ENCODE measurements at regions of chr1 and their contacts with region 1.

Region 1: DNA sequence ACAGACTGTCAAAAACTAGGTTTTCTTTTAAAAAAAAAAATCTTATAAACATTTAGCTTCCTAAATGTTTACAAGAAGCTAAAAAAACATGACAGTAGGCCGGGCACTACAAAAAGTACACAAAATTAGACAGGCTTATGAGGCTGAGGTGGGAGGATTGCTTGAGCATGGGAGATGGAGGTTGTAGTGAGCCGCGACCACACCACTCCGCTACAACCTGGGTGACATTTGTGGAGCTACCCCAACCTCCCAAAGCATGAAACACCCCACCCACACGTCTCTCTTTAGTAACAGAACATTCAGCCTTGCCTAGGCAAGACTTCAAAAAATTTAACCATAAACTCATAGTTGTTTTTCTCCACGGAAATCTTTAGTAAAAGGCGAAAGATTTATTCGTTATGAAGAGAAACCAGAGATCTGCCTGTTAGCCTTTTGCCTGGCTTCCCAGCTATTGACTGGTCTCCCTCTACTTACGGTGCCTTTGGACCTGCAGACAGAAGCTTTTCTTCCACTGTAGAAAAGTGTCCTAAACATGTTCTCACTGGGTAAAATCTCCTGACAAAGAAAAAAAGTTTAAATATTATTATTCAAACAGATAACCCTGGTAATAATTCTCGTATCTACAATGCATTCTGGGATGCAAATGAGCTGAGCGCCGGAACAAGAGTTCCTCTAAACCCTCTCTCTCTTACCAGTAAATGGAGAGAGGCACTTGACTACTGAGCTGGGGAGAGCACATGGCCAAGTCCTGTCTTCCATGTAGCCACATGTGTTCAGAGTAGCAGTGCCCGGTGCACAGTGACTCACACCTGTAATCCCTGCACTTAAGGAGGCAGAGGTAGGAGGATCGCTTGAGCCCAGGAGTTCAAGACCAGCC is 9.2 kb downstream of the RNU5D-1 start:
- DNase-seq: peak; percentile 95
- ATAC-seq: peak; percentile 94
- H3K4me3 ChIP-seq: no peak overlapping the region; a peak in 1 of 6 replicates
- H3K27ac ChIP-seq: peak overlapping the region; percentile 84
- H3K4me1 ChIP-seq: peaks cover 54% of the 10 kb centered on the region
- H3K27me3 ChIP-seq: 0 out of 5 replicates have a peak, but pooled peaks cover 0 to 6% of the 10 kb centered on the region in 2 experiments
- CTCF ChIP-seq: no peak
- EP300 ChIP-seq: peak; percentile 59 to 63; a peak in 3 of 4 replicates
- POLR2A ChIP-seq: peak; percentile 100
- RAD21 ChIP-seq: peak; percentile 86

Region 2: GRCh38 chr1:44674113-44675000 is 47.4 kb before region 1 on chr1 and contains the starts of genes ARMH1 and TMEM53:
- CTCF ChIA-PET with region 1: no interaction called
- POLR2A ChIA-PET with region 1: interaction called, 34 read pairs
- in situ Hi-C with region 1: no loop called
- intact Hi-C with region 1: no loop called
- DNase-seq: peak; percentile 98
- ATAC-seq: peak; percentile 93
- H3K4me3 ChIP-seq: peak within 1 kb of the TSS; percentile 64 to 76 (median 67)
- H3K27ac ChIP-seq: peak within 1 kb of the TSS; percentile 93
- H3K4me1 ChIP-seq: peaks cover 65% of the 10 kb centered on the region
- H3K27me3 ChIP-seq: no peaks in the 10 kb centered on the region
- CTCF ChIP-seq: peak; percentile 32; the same call in 1 of the 2 replicates
- EP300 ChIP-seq: peak in 1 of 2 experiments; percentile 18; a peak in 2 of 4 replicates
- POLR2A ChIP-seq: peak; percentile 70 to 91
- RAD21 ChIP-seq: peak; percentile 47; the same call in 1 of the 2 replicates
- total RNA-seq, gene ARMH1: not detected in 2 replicates
- total RNA-seq, gene TMEM53: 12.6 and 13.8 TPM in 2 replicates

Region 3: DNA sequence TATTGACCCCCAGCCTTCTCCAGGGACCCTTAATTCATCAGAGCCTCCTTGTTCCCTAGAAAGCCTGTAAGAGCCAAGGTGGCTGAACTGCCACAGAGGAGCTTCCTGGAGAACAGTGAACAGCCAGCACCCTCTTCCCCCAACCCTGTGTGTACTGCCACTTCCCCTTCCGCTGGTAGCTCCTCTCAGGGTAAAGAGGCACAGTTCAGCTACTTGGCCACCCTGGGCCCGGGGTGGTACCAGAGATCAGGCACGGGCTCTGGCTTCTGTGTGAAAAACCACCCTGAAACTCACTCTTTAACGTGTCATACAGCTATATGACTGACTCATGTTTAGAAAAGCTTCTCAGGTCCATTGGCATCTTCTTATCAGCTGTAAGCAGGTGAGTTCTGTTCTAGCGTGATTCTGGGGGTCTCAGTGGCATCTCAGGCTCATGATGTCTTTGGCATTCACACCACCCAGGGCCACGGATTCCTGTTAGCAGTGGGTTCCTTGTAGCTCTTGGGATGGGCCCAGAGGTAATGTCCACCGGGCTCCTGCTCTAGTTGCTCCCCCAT is 24.9 kb before region 1 on chr1:
- CTCF ChIA-PET with region 1: no interaction called
- POLR2A ChIA-PET with region 1: interaction called, 17 read pairs
- in situ Hi-C with region 1: no loop called
- intact Hi-C with region 1: no loop called
- DNase-seq: no peak
- ATAC-seq: no peak
- H3K4me3 ChIP-seq: no peak overlapping the region
- H3K27ac ChIP-seq: no peak overlapping the region
- H3K4me1 ChIP-seq: peaks cover 47% of the 10 kb centered on the region
- H3K27me3 ChIP-seq: no peaks in the 10 kb centered on the region
- CTCF ChIP-seq: no peak
- EP300 ChIP-seq: no peak
- POLR2A ChIP-seq: no peak
- RAD21 ChIP-seq: no peak

Region 4: DNA sequence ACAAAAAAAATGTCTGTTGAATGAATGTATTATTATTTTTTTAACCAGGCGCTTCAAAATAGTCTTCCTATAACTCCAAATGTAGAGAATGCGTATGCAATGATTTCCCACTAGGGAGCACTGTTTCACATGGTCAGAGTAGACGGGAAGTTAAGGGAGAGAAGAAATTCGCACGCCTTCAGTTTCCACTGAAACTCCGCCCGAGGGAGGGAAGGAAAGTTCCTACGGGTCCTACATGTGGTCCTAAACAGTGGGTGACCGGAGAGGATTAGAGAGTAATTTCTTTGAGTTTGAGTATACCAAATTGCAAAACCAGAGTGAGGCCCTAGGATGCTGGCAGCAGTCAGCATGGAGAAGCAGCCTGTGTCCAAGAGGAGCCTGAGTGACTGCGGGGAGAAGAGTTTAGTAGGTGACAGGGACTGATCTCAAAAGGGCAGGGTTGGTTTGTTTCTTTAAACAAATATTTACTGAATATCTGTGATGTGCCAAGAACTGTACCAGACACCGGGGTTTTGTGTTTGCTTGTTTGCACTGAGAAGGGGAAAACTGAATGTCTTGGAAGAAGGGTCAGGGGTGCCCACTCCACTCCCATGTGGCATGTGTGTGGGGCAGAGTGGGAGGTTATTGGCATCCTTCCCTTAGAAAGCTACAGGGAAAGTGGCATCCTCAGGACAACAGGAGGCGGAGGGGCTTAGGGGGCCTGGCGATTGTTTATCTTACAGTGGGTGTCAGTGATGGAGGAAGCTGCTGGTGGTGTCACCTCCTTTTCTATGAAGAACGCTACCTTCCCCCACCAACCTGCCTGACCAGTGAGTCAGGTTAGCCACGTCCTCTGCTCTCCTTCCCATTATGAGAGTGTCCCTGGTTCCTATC is 13.5 kb before region 1 on chr1:
- CTCF ChIA-PET with region 1: no interaction called
- POLR2A ChIA-PET with region 1: interaction called, 23 read pairs
- in situ Hi-C with region 1: no loop called
- intact Hi-C with region 1: no loop called
- DNase-seq: peak; percentile 54
- ATAC-seq: peak; percentile 84
- H3K4me3 ChIP-seq: peak overlapping the region in 2 of 3 experiments; percentile 27 to 37; a peak in 3 of 6 replicates
- H3K27ac ChIP-seq: peak overlapping the region; percentile 20
- H3K4me1 ChIP-seq: peaks cover 59% of the 10 kb centered on the region
- H3K27me3 ChIP-seq: no peaks in the 10 kb centered on the region; a peak in 1 of 5 replicates
- CTCF ChIP-seq: peak; percentile 70
- EP300 ChIP-seq: peak in 1 of 2 experiments; percentile 60; a peak in 2 of 4 replicates
- POLR2A ChIP-seq: no peak
- RAD21 ChIP-seq: peak; percentile 13; the same call in 1 of the 2 replicates

Region 5: GRCh38 chr1:44775078-44775929 is 53.6 kb after region 1 on chr1 and contains the start of gene RPS8:
- CTCF ChIA-PET with region 1: no interaction called
- POLR2A ChIA-PET with region 1: interaction called, 16 read pairs
- in situ Hi-C with region 1: no loop called
- intact Hi-C with region 1: no loop called
- DNase-seq: peak; percentile 91
- ATAC-seq: peak; percentile 80
- H3K4me3 ChIP-seq: peak within 1 kb of the TSS; percentile 84 to 97 (median 96)
- H3K27ac ChIP-seq: peak within 1 kb of the TSS; percentile 81
- H3K4me1 ChIP-seq: peaks cover 40% of the 10 kb centered on the region
- H3K27me3 ChIP-seq: no peaks in the 10 kb centered on the region; a peak in 1 of 5 replicates
- CTCF ChIP-seq: 0 out of 2 replicates have a peak, but pooled peaks have one; percentile 9
- EP300 ChIP-seq: 0 out of 4 replicates have a peak, but pooled peaks of 1 of the 2 experiments have one; percentile 11
- POLR2A ChIP-seq: peak; percentile 99
- RAD21 ChIP-seq: peak; percentile 39
- total RNA-seq, gene RPS8: 2,628 and 3,186 TPM in 2 replicates

Region 6: GRCh38 chr1:44819608-44820327 is 98.0 kb after region 1 on chr1:
- CTCF ChIA-PET with region 1: no interaction called
- POLR2A ChIA-PET with region 1: interaction called, 43 read pairs
- in situ Hi-C with region 1: no loop called
- intact Hi-C with region 1: no loop called
- DNase-seq: peak; percentile 90
- ATAC-seq: peak; percentile 89
- H3K4me3 ChIP-seq: peak overlapping the region; percentile 57 to 80 (median 64)
- H3K27ac ChIP-seq: peak overlapping the region; percentile 100
- H3K4me1 ChIP-seq: peaks cover 30% of the 10 kb centered on the region
- H3K27me3 ChIP-seq: no peaks in the 10 kb centered on the region
- CTCF ChIP-seq: peak; percentile 36; the same call in 1 of the 2 replicates
- EP300 ChIP-seq: peak; percentile 64 to 75; a peak in 2 of 4 replicates
- POLR2A ChIP-seq: peak in 1 of 2 experiments; percentile 100; a peak in 2 of 4 replicates
- RAD21 ChIP-seq: peak; percentile 38

Region 7: GRCh38 chr1:44894591-44894990 is 172.9 kb after region 1 on chr1:
- CTCF ChIA-PET with region 1: no interaction called
- POLR2A ChIA-PET with region 1: no interaction called
- in situ Hi-C with region 1: no loop called
- intact Hi-C with region 1: no loop called
- DNase-seq: no peak
- ATAC-seq: no peak
- H3K4me3 ChIP-seq: no peak overlapping the region
- H3K27ac ChIP-seq: no peak overlapping the region
- H3K4me1 ChIP-seq: no peaks in the 10 kb centered on the region
- H3K27me3 ChIP-seq: no peaks in the 10 kb centered on the region
- CTCF ChIP-seq: no peak
- EP300 ChIP-seq: no peak
- POLR2A ChIP-seq: no peak
- RAD21 ChIP-seq: no peak

Region 8: DNA sequence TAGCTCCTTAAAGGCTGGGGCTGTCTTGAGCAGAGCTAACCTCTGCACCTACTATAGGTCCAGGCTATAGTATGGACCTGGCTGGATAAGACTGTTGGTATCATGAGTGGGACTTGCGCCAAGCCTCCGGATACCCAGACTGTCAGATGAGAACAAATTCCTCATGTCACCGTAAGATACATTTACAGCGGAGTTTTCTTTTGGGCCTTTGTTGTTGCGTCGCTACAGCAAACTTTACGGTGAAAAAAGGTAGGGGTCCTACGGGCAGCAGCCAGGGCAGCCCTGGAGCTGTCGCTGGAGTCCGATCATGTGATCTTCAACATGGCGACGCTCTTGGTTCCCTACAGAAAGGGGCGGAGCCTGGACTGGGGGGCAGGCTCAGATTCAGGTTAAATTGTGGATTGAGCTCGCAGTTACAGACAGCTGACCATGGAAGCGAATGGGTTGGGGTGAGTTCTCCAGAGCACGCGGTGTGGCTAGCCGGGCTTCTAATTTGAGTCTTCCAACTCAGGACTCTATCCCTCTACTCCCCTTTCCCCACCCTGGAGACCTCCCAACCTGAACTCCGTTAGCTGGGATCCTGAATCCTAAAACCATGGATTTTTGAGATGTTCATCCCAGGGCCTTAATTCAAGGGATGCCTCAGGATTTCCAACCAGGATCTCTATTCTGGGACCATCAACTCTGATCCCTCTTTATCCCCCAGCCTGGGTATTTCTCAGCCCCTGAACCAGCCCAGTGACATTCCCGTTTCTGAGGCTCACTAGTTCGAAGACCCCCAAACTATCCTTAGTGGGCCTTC is 290.3 kb after region 1 on chr1 and contains the start of gene UROD:
- CTCF ChIA-PET with region 1: no interaction called
- POLR2A ChIA-PET with region 1: interaction called, 10 read pairs
- in situ Hi-C with region 1: no loop called
- intact Hi-C with region 1: no loop called
- DNase-seq: peak; percentile 94
- ATAC-seq: peak; percentile 75
- H3K4me3 ChIP-seq: peak within 1 kb of the TSS; percentile 73 to 95 (median 78)
- H3K27ac ChIP-seq: peak within 1 kb of the TSS; percentile 85
- H3K4me1 ChIP-seq: peaks cover 32% of the 10 kb centered on the region
- H3K27me3 ChIP-seq: no peaks in the 10 kb centered on the region; a peak in 1 of 5 replicates
- CTCF ChIP-seq: peak; percentile 4; the same call in 1 of the 2 replicates
- EP300 ChIP-seq: 0 out of 4 replicates have a peak, but pooled peaks of 1 of the 2 experiments have one; percentile 12
- POLR2A ChIP-seq: peak; percentile 91 to 96
- RAD21 ChIP-seq: no peak
- total RNA-seq, gene UROD: 171 and 243 TPM in 2 replicates

Measured in HepG2 (cell line).